AG04449 (cell line): ENCODE measurements at regions of chr3 and their contacts with region 1.

Region 1: GRCh38 chr3:49802719-49803464 is at the start of gene INKA1:
- DNase-seq: no peak
- H3K4me3 ChIP-seq: peak within 1 kb of the TSS; percentile 87
- CTCF ChIP-seq: peak; percentile 96

Region 2: GRCh38 chr3:49786241-49786958 is 16.5 kb before region 1 on chr3 and contains the start of gene IP6K1:
- CTCF ChIA-PET with region 1: interaction called, 48 read pairs
- POLR2A ChIA-PET with region 1: interaction called, 8 read pairs
- DNase-seq: peak; percentile 98
- H3K4me3 ChIP-seq: peak within 1 kb of the TSS; percentile 76
- CTCF ChIP-seq: no peak

Region 3: DNA sequence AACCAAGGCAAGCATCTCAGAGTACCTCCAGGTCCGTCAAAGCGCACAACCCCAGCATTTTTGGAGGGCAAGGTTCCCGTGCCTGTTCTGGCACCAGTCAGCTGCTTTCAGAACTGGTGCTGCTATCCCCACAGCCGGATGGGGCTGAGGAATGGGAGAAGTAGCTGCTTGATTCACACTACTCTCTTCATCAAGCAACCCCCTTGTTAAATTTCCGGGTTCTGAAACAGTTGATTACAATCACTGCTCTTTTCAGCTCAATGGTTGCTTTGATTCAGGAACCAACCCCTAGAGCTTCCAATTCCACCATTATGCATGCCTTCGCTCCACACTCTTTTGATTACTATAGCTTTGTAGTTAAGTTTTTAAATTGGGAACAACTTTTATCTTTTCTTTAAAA is 23.1 kb after region 1 on chr3:
- CTCF ChIA-PET with region 1: interaction called, 507 read pairs
- POLR2A ChIA-PET with region 1: no interaction called
- DNase-seq: no peak
- H3K4me3 ChIP-seq: no peak overlapping the region
- CTCF ChIP-seq: no peak

Region 4: GRCh38 chr3:49856181-49857005 is 53.5 kb after region 1 on chr3 and contains the start of gene TRAIP:
- CTCF ChIA-PET with region 1: interaction called, 12 read pairs
- POLR2A ChIA-PET with region 1: interaction called, 4 read pairs
- DNase-seq: peak; percentile 45
- H3K4me3 ChIP-seq: peak within 1 kb of the TSS; percentile 88
- CTCF ChIP-seq: no peak

Region 5: DNA sequence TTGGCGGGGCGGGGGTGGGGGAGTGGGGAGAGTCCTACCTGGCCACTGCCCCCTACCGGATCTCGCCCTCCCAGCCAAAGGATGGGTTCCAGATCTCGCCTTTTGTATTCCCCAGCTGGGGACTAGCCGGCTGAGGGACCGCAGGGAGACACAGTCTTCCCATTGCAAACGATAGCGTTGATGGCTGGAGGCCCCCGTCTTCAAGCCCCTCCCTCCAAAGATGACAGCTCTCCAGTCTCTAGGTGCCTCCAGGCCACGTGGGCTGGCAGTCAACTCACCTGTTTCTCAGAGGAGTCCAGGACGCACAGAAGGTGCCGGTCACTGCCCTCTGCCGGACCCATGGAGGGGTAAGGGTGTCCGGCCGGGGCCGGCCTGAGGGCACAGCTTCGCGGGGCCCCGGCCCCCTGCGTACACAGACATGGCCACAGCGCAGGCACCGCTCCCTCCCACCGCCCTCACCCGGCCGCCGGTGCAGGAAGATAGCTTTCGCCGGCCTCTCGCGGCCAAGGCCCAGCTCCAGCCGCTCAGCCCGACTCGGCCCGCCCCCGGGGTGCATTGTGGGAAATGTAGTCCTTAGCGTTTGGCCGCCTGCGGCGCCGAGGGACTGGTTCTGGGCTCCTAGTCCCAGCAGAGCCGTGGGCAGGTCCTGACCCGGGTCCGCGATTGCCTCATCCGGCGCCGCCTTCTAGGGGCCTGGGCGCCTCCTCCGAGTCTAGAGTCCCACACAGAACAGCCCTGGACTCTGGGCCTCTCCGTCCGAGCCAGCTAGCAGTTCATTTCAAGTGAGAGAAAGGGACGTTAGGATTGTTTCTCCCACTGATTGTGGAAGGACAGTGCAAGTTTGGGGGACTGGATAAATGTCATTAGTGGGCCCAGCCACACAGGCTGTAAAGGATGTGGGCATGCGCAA is 126.7 kb after region 1 on chr3 and contains the start of gene MON1A:
- CTCF ChIA-PET with region 1: interaction called, 12 read pairs
- POLR2A ChIA-PET with region 1: interaction called, 3 read pairs
- DNase-seq: no peak
- H3K4me3 ChIP-seq: peak within 1 kb of the TSS; percentile 86
- CTCF ChIP-seq: peak; percentile 25